Sciatic nerve (tissue), 2 donors: ENCODE measurements at regions of chr17 and their contacts with region 1.

Region 1: DNA sequence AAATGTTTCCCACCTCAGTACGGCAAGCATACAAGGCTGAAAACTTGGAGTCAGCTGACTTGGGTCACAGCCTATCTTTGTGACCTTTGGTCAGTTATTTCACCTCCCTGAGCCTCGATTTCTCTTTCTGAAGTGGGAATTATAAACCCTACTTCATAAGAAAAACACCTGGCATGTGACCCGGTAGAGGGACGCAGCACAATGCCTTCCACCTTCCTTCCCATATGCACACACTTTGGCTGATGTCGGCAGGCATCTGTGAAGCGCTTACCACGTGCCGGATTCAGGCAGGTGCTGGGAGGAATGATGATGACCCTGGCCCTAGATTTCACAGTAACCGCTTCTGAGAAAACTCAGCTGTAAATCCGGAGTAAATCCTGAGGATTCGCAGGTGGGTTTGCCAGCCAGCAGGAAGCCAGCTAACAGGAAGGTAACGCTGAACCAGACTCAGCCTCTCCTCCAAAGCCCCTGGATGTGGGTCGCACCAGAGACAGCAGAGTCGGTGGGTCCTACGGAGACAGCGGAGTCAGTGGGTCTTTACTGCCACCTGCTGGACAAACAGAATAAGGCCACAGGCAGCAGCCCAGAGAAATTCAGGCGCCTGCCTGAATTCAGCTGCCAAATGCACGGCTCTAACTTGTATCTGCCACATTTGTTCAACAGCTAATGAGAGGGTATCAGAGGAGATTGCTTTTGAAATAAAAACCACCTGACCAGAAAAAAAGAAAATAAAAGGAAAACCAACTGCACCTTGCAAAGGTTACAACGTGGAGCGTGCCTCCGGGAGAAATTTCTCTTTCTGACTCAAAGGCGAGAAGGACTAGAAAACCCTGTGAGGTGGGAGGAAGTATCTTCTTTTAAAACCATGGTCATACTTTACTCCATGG is 16.6 kb downstream of the COPRS start:
- DNase-seq: peak; percentile 83
- ATAC-seq: peak; percentile 95

Region 2: GRCh38 chr17:31535581-31535981 is 306.8 kb before region 1 on chr17:
- intact Hi-C with region 1: loop called (anchors 5 kb)
- DNase-seq: no peak
- ATAC-seq: no peak

Region 3: GRCh38 chr17:31558748-31559644 is 283.4 kb before region 1 on chr17:
- intact Hi-C with region 1: loop called (anchors 2 kb)
- DNase-seq: peak; percentile 89
- ATAC-seq: peak; percentile 80

Region 4: DNA sequence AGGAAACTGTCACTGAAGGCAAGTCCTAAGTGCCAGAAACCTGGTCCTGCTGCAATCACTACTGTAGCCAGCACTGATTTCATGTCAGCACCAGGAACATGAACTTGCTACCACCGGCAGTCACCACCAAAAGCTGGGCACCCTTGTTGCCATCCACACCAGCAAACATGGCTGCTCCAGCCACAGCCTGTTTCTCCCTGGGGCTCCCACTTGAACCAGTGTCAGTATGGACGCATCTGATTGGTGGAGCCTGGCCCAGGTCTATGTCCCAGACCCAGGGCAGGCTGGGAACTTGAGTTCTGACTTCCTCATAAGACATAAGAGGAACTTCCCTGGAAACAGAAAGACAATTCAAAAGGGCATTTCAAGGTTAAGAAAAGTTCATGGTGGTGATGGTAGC is 39.9 kb before region 1 on chr17:
- intact Hi-C with region 1: no loop called
- DNase-seq: no peak
- ATAC-seq: no peak

Region 5: GRCh38 chr17:31869797-31870568 is 27.6 kb after region 1 on chr17:
- intact Hi-C with region 1: no loop called
- DNase-seq: no peak
- ATAC-seq: no peak

Region 6: GRCh38 chr17:32127158-32127897 is 284.9 kb after region 1 on chr17:
- intact Hi-C with region 1: no loop called
- DNase-seq: peak; percentile 89
- ATAC-seq: peak; percentile 98